Activated B cell treated with CpG ODN at 0.5 μM for 24 hours (primary cell): ENCODE measurements at regions of chr7 and their contacts with region 1.

Region 1: GRCh38 chr7:129825496-129826267 is 127.1 kb downstream of the UBE2H start:
- DNase-seq: peak; percentile 94
- ATAC-seq: peak; percentile 88
- H3K4me3 Mint-ChIP-seq: peak overlapping the region; percentile 90
- H3K27ac Mint-ChIP-seq: peak overlapping the region; percentile 50
- H3K4me1 Mint-ChIP-seq: peaks cover 18% of the 10 kb centered on the region
- H3K27me3 Mint-ChIP-seq: peaks cover 4% of the 10 kb centered on the region
- CTCF ChIP-seq: peak; percentile 43

Region 2: DNA sequence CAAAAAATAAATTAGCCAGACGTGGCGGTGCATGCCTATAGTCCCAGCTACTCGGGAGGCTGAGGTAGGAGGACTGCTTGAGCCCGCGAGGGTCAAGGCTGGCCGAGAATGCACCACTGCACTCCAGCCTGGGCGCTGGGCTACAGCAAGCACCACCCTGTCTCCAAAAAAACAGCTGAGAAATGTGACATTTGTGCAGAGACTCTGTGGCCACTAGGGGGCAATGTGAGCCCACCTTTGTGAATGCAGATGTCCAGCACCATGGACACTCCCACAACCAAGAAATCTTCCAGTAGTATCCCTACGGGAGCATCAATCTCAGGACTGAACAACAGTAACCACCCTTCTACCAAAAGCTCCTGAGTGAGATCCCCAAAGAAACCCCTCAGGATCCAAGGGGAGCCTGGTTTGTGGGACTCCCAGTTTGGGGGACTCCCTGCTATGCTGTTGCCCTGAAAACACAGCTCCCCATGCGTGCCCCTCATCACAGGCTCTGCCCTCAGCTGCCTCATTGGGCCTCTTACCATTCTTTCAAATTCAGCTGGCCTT is 607.1 kb before region 1 on chr7:
- CTCF ChIA-PET with region 1: no interaction called
- POLR2A ChIA-PET with region 1: no interaction called
- intact Hi-C with region 1: loop called (anchors 2 kb)
- DNase-seq: peak; percentile 61
- ATAC-seq: peak; percentile 83
- H3K4me3 Mint-ChIP-seq: no peak overlapping the region
- H3K27ac Mint-ChIP-seq: no peak overlapping the region
- H3K4me1 Mint-ChIP-seq: peaks cover 15% of the 10 kb centered on the region
- H3K27me3 Mint-ChIP-seq: no peaks in the 10 kb centered on the region
- CTCF ChIP-seq: peak; percentile 32

Region 3: DNA sequence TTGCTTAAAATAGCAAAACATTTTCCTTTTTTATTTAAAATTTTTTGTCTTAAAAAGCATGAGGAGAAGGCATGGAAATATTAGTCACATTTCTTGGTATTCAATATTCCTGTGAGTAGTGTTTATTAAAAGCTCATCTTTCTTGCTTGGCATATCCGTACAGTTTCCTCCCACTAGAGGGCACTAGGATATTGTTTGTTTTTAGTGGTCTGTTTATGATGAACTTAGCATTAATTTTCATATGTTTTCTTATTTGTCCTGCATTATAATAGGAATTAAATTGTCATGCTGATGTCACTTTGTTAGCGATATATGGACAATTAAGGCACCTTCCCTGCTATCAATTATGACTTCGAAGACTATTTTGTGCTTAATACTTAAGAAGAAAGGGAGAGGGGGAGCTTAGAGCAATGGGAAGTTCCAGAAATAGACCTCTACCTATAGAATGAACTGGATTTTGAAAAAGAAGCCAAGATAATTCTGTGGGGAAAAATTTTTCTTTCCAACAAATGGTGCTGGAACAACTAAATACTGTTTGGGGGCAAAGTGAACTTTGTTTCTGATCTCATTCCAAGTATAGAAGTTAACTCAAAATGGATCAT is 482.5 kb before region 1 on chr7:
- CTCF ChIA-PET with region 1: interaction called, 4 read pairs
- POLR2A ChIA-PET with region 1: no interaction called
- intact Hi-C with region 1: loop called (anchors 1 kb)
- DNase-seq: no peak
- ATAC-seq: no peak
- H3K4me3 Mint-ChIP-seq: no peak overlapping the region
- H3K27ac Mint-ChIP-seq: no peak overlapping the region
- H3K4me1 Mint-ChIP-seq: peaks cover 6% of the 10 kb centered on the region
- H3K27me3 Mint-ChIP-seq: no peaks in the 10 kb centered on the region
- CTCF ChIP-seq: peak; percentile 46

Region 4: DNA sequence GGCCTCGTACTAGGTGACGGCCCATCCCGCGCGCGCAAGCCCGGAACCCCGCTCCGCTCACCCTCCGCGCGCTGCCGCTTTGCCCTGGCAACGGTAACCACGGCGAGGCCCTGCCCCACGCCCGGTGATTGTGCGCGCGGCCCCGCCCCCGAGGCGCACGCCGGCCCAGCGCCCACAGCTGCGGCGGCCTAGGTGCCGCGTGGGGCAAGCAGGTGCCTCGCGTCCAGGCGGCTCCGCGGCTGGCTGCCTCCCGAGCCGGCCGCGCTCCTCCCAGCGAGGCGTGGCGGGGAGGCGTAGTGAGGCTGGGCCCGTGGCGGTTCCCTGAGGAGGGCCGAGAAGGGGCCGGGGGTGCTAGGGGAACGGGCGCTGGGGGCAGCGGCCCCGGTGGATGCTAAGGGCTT is 323.3 kb before region 1 on chr7 and contains the start of gene SMKR1:
- CTCF ChIA-PET with region 1: no interaction called
- POLR2A ChIA-PET with region 1: no interaction called
- intact Hi-C with region 1: loop called (anchors 1 kb)
- DNase-seq: peak; percentile 97
- ATAC-seq: peak; percentile 93
- H3K4me3 Mint-ChIP-seq: peak within 1 kb of the TSS; percentile 83
- H3K27ac Mint-ChIP-seq: peak within 1 kb of the TSS; percentile 78
- H3K4me1 Mint-ChIP-seq: peaks cover 30% of the 10 kb centered on the region
- H3K27me3 Mint-ChIP-seq: no peaks in the 10 kb centered on the region
- CTCF ChIP-seq: no peak
- total RNA-seq, gene SMKR1: 2.2 and 2.4 TPM in 2 replicates

Region 5: DNA sequence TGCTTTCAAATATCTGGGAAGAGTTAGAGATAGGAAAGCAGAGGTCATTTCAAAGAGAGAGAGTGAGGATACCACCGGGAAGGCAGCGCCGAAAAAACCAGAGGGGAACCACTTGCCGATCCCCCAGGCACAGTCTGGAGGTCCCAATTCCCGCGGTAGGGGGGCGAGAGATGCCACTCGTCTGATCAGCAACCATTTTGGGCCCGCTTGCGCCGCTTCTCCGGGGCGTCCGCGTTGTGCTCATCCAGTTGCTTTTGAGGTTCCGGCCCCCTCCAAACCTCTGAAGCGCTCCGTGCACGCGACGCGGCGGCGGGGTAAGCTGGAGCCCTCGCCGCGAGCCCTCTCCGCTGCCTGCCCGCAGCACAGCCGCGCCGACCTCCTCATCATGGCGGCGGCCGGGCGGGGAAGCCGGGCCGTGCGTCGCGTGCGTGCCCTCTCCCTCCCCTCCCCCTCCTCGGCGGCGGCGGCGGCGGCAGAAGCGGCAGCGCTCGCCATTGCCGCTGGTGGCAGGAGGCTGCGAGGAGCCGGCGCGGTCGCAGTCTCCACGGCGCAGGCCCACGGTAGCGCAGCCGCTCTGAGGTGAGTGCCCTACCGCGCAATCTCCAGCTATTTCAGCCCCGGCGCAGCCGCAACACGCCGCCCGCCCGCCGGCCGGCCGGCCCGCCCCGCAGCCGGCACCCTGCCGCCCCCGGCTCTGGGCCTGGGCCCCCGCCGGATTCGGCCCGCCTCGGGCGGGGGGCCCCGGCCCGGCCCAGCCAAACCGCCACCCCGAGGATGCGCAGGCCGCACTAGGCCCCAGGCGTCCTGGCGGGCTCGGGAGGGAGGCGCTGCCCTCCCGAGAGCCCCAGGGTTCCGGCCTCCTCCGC is 214.2 kb before region 1 on chr7 and contains the start of gene NRF1:
- CTCF ChIA-PET with region 1: interaction called, 5 read pairs
- POLR2A ChIA-PET with region 1: no interaction called
- intact Hi-C with region 1: loop called (anchors 1 kb)
- DNase-seq: peak; percentile 95
- ATAC-seq: peak; percentile 89
- H3K4me3 Mint-ChIP-seq: peak within 1 kb of the TSS; percentile 91
- H3K27ac Mint-ChIP-seq: peak within 1 kb of the TSS; percentile 92
- H3K4me1 Mint-ChIP-seq: peaks cover 58% of the 10 kb centered on the region
- H3K27me3 Mint-ChIP-seq: no peaks in the 10 kb centered on the region
- CTCF ChIP-seq: no peak
- total RNA-seq, gene NRF1: 27.4 and 29.8 TPM in 2 replicates

Region 6: DNA sequence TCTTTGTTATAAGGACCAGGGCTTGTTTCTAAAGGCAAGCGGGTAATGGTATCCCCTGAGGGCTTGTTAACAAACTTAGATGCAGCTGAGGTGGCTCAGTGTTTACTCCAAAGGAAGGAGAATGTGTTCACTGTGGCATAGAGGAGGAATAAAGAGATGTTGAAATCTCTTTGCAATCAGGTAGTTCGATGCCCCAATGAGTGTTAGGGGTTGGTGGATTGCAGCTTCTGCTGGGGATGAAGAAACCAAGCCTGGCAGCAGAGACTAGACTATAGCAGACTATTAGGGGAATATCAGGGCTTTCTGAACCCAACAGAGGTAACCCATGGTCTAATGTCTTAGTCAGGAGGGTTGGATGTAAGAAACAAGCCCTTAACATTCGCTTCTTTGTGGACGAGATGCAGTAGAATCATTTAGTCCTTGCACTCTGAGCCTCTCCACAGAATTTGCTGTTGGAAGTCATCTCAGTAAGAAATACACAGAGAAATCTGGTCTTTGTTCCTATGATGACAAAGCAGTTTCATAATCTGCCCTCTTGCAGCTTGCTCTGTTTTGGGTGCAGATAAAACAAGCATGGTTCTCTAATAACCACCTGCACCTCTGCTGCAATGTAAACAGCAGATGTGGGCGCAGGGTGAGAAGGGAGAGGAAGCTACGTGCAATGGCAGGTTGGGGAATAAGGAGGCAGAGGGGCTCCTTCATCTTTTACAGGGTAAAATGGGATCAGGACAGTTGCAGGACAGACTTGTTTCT is 105.5 kb before region 1 on chr7:
- CTCF ChIA-PET with region 1: no interaction called
- POLR2A ChIA-PET with region 1: no interaction called
- intact Hi-C with region 1: loop called (anchors 10 kb)
- DNase-seq: no peak
- ATAC-seq: no peak
- H3K4me3 Mint-ChIP-seq: no peak overlapping the region
- H3K27ac Mint-ChIP-seq: no peak overlapping the region
- H3K4me1 Mint-ChIP-seq: no peaks in the 10 kb centered on the region
- H3K27me3 Mint-ChIP-seq: no peaks in the 10 kb centered on the region
- CTCF ChIP-seq: no peak

Region 7: DNA sequence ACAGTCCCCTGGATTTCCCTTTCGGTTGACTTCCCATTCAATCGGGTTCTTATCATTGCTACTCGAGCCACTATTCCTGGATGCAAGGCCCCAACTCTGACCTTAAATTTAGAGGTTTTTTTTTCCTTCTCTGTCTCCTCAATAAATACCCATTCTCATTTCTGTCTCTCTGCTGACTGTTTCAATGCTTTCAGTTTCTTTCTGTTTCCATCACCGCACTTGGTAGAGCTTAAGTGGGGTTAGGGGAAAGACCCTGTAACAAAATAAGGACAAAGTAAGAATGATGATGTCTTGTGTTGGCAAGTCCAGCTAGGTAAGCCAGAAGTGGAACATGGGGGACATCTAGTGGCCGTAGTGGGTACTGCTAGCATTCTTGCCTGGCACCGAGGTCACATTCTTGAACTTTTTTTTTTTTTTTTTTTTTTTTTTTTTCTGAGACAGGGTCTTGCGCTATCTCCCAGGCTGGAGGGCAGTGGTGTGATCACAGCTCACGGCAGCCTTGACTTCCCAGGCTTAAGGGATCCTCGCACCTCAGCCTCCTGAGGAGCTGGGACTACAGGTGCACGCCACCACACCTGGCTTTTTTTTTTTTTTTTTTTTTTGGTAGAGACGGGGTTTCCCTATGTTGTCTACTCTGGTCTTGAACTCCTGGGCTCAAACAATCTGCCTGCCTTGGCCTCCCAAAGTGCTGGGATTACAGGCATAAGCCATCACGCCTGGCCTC is 185.2 kb after region 1 on chr7:
- CTCF ChIA-PET with region 1: interaction called, 28 read pairs
- POLR2A ChIA-PET with region 1: interaction called, 3 read pairs
- intact Hi-C with region 1: loop called (anchors 1 kb)
- DNase-seq: peak; percentile 74
- ATAC-seq: peak; percentile 91
- H3K4me3 Mint-ChIP-seq: no peak overlapping the region
- H3K27ac Mint-ChIP-seq: no peak overlapping the region
- H3K4me1 Mint-ChIP-seq: peaks cover 9% of the 10 kb centered on the region
- H3K27me3 Mint-ChIP-seq: no peaks in the 10 kb centered on the region
- CTCF ChIP-seq: peak; percentile 51